ENCODE measurements at regions of chr12 and their contacts with region 1.

Region 1: GRCh38 chr12:10364815-10365622 is 24.8 kb downstream of the KLRK1 start:
- DNase-seq: peak; percentile 59 to 76 (median 69)
- H3K4me3 ChIP-seq: peak overlapping the region; percentile 59
- H3K27ac ChIP-seq: peak overlapping the region; percentile 91 to 96
- H3K4me1 ChIP-seq: peaks cover 11% of the 10 kb centered on the region
- H3K27me3 ChIP-seq: no peaks in the 10 kb centered on the region
- CTCF ChIP-seq: no peak
- EP300 ChIP-seq: no peak
- POLR2A ChIP-seq: peak; percentile 7

Region 2: GRCh38 chr12:9869307-9870161 is 495.5 kb before region 1 on chr12 and contains the start of gene CLEC2B:
- intact Hi-C with region 1: loop called in 1 of 4 experiments (anchors 10 kb)
- DNase-seq: peak in 3 of 5 donors; percentile 31 to 37 (median 34)
- H3K4me3 ChIP-seq: peak within 1 kb of the TSS; percentile 43
- H3K27ac ChIP-seq: peak within 1 kb of the TSS; percentile 63 to 92
- H3K4me1 ChIP-seq: peaks cover 2% of the 10 kb centered on the region
- H3K27me3 ChIP-seq: no peaks in the 10 kb centered on the region
- CTCF ChIP-seq: peak in 1 of 3 donors; percentile 14
- EP300 ChIP-seq: no peak
- POLR2A ChIP-seq: peak; percentile 48
- total RNA-seq, gene CLEC2B: 16.4 to 60.4 (median 26.0) TPM

Region 3: DNA sequence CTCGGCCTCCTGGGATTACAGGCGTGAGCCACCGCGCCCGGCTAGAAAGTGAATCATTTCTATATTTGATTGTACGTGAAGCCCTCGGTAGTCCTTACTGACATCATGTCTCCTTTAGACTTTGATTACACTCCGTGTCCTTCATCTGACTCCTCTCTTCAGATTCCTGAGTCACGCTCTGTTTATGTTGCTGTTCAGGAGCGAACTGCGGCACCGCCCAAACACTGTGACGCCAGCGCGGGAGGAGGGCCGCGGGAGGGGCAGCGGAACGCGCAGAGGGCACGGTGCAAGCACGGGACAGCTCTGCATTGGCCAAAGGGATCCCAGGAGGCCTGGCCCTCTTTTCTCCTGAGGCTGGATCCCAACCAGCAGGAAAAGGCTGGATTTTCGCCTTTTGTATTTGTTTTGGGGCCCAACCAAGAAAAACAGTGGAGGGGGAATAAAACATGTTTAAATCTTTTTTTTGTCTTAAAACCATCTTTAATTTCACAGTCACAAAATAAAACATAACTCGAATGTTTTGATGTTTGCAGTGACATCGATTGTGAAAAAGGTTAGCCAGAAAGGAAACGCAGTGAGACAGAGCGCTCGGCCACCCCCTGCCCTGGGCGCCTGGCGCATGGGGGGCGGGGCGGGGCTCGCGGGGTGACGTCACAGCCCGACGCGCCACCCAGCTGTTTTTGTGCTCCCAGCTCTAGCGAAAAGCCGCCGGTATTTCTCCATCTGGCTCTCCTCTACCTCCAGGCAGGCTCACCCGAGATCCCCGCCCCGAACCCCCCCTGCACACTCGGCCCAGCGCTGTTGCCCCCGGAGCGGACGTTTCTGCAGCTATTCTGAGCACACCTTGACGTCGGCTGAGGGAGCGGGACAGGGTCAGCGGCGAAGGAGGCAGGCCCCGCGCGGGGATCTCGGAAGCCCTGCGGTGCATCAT is 152.6 kb before region 1 on chr12 and contains the start of gene GABARAPL1:
- intact Hi-C with region 1: loop called in 3 of 4 experiments (anchors 2 to 10 kb)
- DNase-seq: peak; percentile 97 to 98 (median 98)
- H3K4me3 ChIP-seq: peak within 1 kb of the TSS; percentile 89
- H3K27ac ChIP-seq: peak within 1 kb of the TSS; percentile 97 to 100
- H3K4me1 ChIP-seq: peaks cover 5% of the 10 kb centered on the region
- H3K27me3 ChIP-seq: no peaks in the 10 kb centered on the region
- CTCF ChIP-seq: peak in 1 of 3 donors; percentile 22
- EP300 ChIP-seq: peak; percentile 95
- POLR2A ChIP-seq: peak; percentile 68
- total RNA-seq, gene GABARAPL1: 53.1 to 139 (median 96.1) TPM

Region 4: GRCh38 chr12:10721651-10722501 is 356.9 kb after region 1 on chr12:
- intact Hi-C with region 1: loop called in 1 of 4 experiments (anchors 10 kb)
- DNase-seq: peak; percentile 91 to 97 (median 95)
- H3K4me3 ChIP-seq: peak overlapping the region; percentile 93
- H3K27ac ChIP-seq: peak overlapping the region; percentile 99 to 100
- H3K4me1 ChIP-seq: peaks cover 10% of the 10 kb centered on the region
- H3K27me3 ChIP-seq: no peaks in the 10 kb centered on the region
- CTCF ChIP-seq: no peak
- EP300 ChIP-seq: peak; percentile 99
- POLR2A ChIP-seq: peak; percentile 47

Measured in ovary (tissue), 10 donors.